ENCODE measurements at regions of chrX and their contacts with region 1.

Region 1: GRCh38 chrX:102863735-102864134 is 73.3 kb upstream of the RAB40AL start:
- DNase-seq: peak; percentile 57 to 77
- H3K4me3 ChIP-seq: no peak overlapping the region
- H3K27ac ChIP-seq: no peak overlapping the region
- H3K4me1 ChIP-seq: no peaks in the 10 kb centered on the region
- H3K27me3 ChIP-seq: no peaks in the 10 kb centered on the region
- CTCF ChIP-seq: peak; percentile 90

Region 2: DNA sequence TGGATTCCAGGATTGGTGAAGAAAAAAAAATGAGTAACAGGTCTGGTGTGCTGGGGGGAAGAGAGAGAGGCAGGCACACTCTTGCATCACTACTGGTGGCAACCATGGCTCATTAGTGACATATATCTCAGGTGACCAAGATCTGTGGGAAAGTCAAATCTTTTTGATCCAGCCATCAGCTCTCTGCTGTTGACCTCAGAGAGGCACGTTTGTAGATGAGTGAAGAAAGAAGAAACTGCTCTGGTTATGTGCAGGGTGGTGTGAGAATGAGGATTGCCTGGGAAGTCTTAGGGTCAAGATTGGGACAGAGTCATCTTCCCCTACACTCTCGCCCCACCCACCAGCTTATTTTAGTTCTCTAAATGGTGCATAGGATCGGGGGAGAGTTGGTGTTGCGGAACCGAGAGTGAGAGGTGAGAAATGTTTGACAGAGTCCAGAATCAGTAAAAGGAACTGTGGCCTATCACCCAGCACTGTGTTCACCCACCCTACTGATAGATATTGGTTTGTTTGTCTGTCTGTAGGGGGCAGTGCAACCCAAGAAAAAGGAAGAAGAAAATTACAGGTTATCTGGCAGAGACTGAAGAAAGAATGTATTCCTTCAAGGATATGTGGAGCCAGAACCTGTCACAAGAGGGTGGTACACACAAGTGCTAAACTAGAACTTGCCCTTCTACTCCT is 1267.9 kb before region 1 on chrX:
- CTCF ChIA-PET with region 1: no interaction called
- POLR2A ChIA-PET with region 1: no interaction called
- intact Hi-C with region 1: loop called (anchors 5 kb)
- DNase-seq: peak; percentile 18 to 52
- H3K4me3 ChIP-seq: no peak overlapping the region
- H3K27ac ChIP-seq: no peak overlapping the region
- H3K4me1 ChIP-seq: no peaks in the 10 kb centered on the region
- H3K27me3 ChIP-seq: peaks cover 23% of the 10 kb centered on the region
- CTCF ChIP-seq: peak; percentile 81

Region 3: DNA sequence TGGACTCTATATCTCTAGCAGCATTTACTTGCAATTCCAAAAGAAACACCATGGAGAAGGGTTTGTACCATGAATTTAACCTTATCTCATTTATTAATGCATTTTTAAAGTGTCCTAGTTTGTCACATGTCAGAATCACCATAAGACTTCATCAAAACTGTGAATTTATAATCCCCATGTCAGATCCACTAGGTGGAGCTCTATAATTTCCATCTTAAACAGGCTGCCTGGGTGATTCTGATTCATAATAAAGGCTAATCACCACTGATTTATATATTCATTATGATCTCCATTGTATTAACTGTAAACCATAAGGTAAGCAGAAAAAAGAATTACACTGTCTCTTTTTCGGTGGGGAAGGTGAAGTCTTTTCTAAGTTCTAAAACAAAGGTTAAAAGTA is 734.3 kb before region 1 on chrX:
- CTCF ChIA-PET with region 1: no interaction called
- POLR2A ChIA-PET with region 1: no interaction called
- intact Hi-C with region 1: loop called (anchors 5 kb)
- DNase-seq: no peak
- H3K4me3 ChIP-seq: no peak overlapping the region
- H3K27ac ChIP-seq: no peak overlapping the region
- H3K4me1 ChIP-seq: no peaks in the 10 kb centered on the region
- H3K27me3 ChIP-seq: no peaks in the 10 kb centered on the region
- CTCF ChIP-seq: peak; percentile 39

Region 4: DNA sequence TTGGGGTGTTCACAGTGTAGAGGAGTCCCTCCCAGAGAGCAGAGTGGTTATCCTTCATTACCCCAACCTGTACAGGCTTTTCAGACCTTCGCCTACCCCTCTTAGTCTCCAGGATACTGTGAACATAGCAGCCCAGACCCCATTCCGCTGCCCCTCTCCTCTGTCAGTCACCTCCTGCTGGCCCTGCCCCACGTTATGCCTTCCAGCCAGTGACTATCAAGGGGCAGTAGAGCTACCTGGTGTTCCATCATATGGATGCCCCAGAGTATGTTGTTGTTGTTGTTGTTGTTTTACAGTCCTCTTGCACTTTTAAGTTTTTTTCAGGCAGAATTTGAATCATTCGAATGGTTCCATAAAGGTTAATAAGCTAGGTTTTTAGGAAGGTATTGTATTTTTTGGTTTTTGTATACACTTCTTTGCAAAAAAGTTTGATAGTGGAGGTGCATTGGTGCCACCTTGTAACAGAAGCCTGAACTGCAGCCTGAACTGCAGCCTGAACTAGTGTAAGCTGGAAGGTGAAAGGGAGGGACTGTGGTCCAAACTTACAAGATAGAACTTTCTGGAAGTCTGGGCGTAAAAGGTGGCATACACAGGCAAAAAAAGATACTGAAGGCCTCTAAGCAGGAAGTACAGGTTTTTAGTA is 28.1 kb before region 1 on chrX:
- CTCF ChIA-PET with region 1: no interaction called
- POLR2A ChIA-PET with region 1: no interaction called
- intact Hi-C with region 1: no loop called
- DNase-seq: peak in 1 of 2 experiments; percentile 4
- H3K4me3 ChIP-seq: no peak overlapping the region
- H3K27ac ChIP-seq: no peak overlapping the region
- H3K4me1 ChIP-seq: no peaks in the 10 kb centered on the region
- H3K27me3 ChIP-seq: no peaks in the 10 kb centered on the region
- CTCF ChIP-seq: peak; percentile 67